ENCODE measurements at regions of chr1 and their contacts with region 1.

Region 1: DNA sequence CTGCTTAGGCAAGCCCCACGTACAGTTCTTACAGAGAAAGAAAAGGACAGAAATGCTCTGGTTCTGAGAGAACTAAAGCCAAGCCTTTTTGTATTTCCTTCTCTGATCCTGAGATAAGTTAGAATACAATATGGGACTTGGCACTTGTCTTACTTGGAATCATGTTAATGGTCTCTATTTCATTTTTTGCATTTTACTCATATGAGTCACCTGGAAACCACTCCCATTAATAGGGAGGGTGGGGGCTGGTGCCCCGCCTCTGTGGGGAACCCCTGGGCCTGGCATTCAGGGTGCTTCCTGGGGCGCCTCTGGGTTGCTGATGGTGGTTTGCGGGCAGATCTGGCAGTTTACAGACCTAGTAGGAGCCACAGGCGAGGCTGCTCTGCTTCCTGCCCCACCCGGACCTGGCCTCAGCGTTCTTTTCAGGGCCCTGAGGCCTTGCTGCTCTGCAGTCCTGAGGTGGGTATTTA is 26.7 kb downstream of the TSPAN2 start:
- DNase-seq: peak; percentile 70 to 97 (median 97)
- ATAC-seq: peak; percentile 97
- H3K4me3 ChIP-seq: peak overlapping the region; percentile 36
- H3K4me3 Mint-ChIP-seq: peak overlapping the region; percentile 60 to 87 (median 78)
- H3K27ac ChIP-seq: peak overlapping the region; percentile 84
- H3K27ac Mint-ChIP-seq: peak overlapping the region; percentile 89 to 100 (median 99)
- H3K4me1 ChIP-seq: peaks cover 32% of the 10 kb centered on the region in 2 donors
- H3K4me1 Mint-ChIP-seq: peaks cover 36 to 59% (median 46%) of the 10 kb centered on the region in 7 donors
- H3K27me3 ChIP-seq: no peaks in the 10 kb centered on the region
- H3K27me3 Mint-ChIP-seq: peaks cover 0 to 6% (median 0%) of the 10 kb centered on the region in 5 donors

Region 2: GRCh38 chr1:114581335-114582287 is 481.0 kb before region 1 on chr1 and contains the start of gene BCAS2:
- CTCF ChIA-PET with region 1: no interaction called
- POLR2A ChIA-PET with region 1: no interaction called
- intact Hi-C with region 1: loop called in 1 of 2 experiments (anchors 2 kb)
- DNase-seq: peak; percentile 71 to 98 (median 97)
- ATAC-seq: peak; percentile 97
- H3K4me3 ChIP-seq: peak within 1 kb of the TSS; percentile 76
- H3K4me3 Mint-ChIP-seq: peak within 1 kb of the TSS; percentile 92 to 99 (median 98)
- H3K27ac ChIP-seq: peak within 1 kb of the TSS; percentile 93
- H3K27ac Mint-ChIP-seq: peak within 1 kb of the TSS; percentile 95 to 99 (median 98)
- H3K4me1 ChIP-seq: peaks cover 21 to 23% of the 10 kb centered on the region in 2 donors
- H3K4me1 Mint-ChIP-seq: peaks cover 14 to 55% (median 41%) of the 10 kb centered on the region in 7 donors
- H3K27me3 ChIP-seq: peaks cover 0 to 3% of the 10 kb centered on the region in 2 donors
- H3K27me3 Mint-ChIP-seq: peaks cover 0 to 4% (median 4%) of the 10 kb centered on the region in 5 donors
- total RNA-seq, gene BCAS2: 32.3 to 87.1 (median 46.0) TPM

Region 3: DNA sequence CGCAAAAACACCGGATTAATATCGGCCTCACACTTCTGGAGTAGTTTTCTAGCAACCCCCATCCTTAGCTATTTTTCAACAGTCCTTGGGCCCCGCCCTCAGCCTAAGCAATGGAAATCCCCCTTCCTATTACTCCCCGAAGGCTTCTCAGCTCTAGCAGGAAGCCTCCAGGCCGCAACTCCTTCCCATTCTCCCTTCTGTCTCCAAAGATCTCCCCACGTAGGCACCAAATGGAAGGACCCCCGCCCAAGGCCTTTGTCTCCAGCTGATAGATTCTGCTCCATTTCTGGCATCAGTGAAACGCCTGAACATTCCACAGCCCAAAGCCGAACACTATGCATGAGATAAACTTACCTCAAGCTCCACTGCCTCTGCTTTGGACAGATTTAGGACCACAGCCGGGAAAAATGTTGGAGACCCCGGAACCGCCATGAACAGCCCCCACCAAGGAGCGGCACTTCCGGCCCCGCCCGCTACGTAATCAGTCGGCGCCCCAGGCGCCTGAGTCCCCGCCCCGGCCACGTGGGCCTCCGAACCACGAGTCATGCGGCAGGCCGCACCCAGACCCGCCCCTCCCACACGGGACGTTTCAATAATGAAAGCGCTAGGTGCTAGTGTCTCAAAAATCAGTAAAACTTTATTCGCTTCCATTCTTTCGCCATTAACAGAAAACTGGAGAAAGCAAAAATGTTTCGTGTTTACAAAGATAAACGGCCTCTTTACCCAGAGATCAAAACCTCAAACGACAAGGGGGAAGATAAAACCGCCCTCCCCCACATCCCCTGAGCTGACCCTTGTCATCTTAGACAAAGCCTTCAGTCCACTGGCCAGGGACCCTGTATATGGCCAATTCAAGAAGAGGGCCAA is 346.0 kb before region 1 on chr1 and contains the start of gene NRAS:
- CTCF ChIA-PET with region 1: no interaction called
- POLR2A ChIA-PET with region 1: no interaction called
- intact Hi-C with region 1: loop called in 1 of 2 experiments (anchors 2 kb)
- DNase-seq: peak; percentile 90 to 96 (median 94)
- ATAC-seq: peak; percentile 98
- H3K4me3 ChIP-seq: peak within 1 kb of the TSS; percentile 98
- H3K4me3 Mint-ChIP-seq: peak within 1 kb of the TSS; percentile 91 to 100 (median 96)
- H3K27ac ChIP-seq: peak within 1 kb of the TSS; percentile 98
- H3K27ac Mint-ChIP-seq: peak within 1 kb of the TSS; percentile 93 to 99 (median 97)
- H3K4me1 ChIP-seq: peaks cover 17 to 20% of the 10 kb centered on the region in 2 donors
- H3K4me1 Mint-ChIP-seq: peaks cover 10 to 34% (median 25%) of the 10 kb centered on the region in 7 donors
- H3K27me3 ChIP-seq: no peaks in the 10 kb centered on the region
- H3K27me3 Mint-ChIP-seq: no peaks in the 10 kb centered on the region
- total RNA-seq, gene NRAS: 22.3 to 56.0 (median 25.0) TPM

Region 4: DNA sequence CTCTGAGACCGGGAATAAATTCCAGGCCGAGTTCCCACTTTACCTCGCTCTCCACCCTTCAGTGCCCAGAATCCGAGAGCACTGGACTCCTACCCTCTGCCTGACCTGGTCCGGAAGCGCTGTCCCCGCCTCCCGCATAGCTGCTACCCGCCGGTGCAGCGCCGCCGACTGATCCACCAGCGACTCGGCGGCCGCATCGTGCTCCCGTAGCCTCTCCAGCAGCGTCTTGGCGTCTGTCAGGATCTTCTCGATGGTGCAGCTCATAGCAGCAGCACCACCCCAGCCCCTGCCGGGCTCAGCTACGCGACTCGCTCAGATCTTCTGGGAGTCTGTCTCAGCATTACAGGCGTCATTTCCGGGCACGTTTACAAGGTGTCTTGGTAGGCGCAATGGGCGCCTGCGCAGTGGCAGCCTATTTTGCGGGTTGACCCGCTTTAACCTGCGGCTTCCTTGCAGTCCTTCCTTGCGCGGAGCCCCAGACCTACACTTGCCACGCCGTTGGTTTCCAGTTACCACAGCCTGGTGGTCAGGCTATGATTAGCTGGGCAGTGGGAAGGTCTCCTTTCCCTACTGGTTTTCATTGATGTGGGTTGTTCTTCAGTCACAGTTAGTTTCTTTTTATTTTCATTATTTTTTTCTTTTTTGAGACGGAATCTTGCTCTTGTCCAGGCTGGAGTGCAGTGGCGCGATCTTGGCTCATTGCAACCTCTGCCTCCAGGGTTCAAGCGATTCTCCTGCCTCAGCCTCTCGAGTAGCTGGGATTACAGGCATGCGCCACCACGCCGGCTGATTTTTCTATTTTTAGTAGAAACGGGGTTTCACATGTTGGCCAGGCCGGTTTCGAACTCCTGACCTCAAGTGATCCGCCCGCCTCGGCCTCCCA is 282.0 kb before region 1 on chr1 and contains the start of gene SIKE1:
- CTCF ChIA-PET with region 1: no interaction called
- POLR2A ChIA-PET with region 1: no interaction called
- intact Hi-C with region 1: loop called in 1 of 2 experiments (anchors 2 kb)
- DNase-seq: peak; percentile 82 to 98 (median 95)
- ATAC-seq: peak; percentile 99
- H3K4me3 ChIP-seq: peak within 1 kb of the TSS; percentile 78
- H3K4me3 Mint-ChIP-seq: peak within 1 kb of the TSS; percentile 98 to 100 (median 100)
- H3K27ac ChIP-seq: peak within 1 kb of the TSS; percentile 87
- H3K27ac Mint-ChIP-seq: peak within 1 kb of the TSS; percentile 96 to 100 (median 99)
- H3K4me1 ChIP-seq: peaks cover 0 to 8% of the 10 kb centered on the region in 2 donors
- H3K4me1 Mint-ChIP-seq: peaks cover 19 to 40% (median 30%) of the 10 kb centered on the region in 7 donors
- H3K27me3 ChIP-seq: no peaks in the 10 kb centered on the region
- H3K27me3 Mint-ChIP-seq: peaks cover 0 to 17% (median 0%) of the 10 kb centered on the region in 5 donors
- total RNA-seq, gene SIKE1: 43.4 to 69.4 (median 61.2) TPM

Region 5: DNA sequence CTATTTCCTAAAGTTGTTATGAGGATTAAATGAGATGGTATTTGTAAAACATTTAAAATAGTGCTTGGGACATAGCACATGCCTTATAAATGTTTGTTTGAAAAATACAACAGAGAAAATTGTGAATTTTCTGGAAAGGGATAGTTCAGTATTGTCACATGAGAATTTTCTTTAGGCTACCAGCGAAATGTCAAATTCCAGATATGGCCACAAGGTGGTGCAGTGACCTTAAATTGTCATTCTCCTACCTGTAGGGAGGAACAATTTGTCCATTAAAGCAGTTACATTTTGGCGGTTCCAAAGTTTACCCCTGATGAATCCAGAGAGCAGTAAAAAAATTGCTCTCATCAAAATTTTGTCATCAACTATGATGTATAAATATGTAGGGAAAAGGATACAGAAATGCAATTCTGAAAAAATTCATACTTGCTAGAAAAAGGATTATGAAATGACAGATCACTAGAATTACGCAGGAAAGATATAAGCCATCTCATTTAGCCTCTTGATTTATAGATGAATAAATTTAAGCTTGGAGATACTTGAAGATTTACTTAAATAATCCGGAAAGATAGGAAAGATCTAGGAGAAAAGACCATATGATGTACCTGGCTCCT is 83.2 kb before region 1 on chr1:
- CTCF ChIA-PET with region 1: interaction called, 3 read pairs
- POLR2A ChIA-PET with region 1: no interaction called
- intact Hi-C with region 1: loop called in 1 of 2 experiments (anchors 1 kb)
- DNase-seq: peak; percentile 32 to 69 (median 56)
- ATAC-seq: peak; percentile 76
- H3K4me3 ChIP-seq: no peak overlapping the region
- H3K4me3 Mint-ChIP-seq: no peak overlapping the region
- H3K27ac ChIP-seq: no peak overlapping the region
- H3K27ac Mint-ChIP-seq: no peak overlapping the region
- H3K4me1 ChIP-seq: no peaks in the 10 kb centered on the region
- H3K4me1 Mint-ChIP-seq: no peaks in the 10 kb centered on the region
- H3K27me3 ChIP-seq: no peaks in the 10 kb centered on the region
- H3K27me3 Mint-ChIP-seq: peaks cover 5 to 23% (median 14%) of the 10 kb centered on the region in 5 donors

Region 6: DNA sequence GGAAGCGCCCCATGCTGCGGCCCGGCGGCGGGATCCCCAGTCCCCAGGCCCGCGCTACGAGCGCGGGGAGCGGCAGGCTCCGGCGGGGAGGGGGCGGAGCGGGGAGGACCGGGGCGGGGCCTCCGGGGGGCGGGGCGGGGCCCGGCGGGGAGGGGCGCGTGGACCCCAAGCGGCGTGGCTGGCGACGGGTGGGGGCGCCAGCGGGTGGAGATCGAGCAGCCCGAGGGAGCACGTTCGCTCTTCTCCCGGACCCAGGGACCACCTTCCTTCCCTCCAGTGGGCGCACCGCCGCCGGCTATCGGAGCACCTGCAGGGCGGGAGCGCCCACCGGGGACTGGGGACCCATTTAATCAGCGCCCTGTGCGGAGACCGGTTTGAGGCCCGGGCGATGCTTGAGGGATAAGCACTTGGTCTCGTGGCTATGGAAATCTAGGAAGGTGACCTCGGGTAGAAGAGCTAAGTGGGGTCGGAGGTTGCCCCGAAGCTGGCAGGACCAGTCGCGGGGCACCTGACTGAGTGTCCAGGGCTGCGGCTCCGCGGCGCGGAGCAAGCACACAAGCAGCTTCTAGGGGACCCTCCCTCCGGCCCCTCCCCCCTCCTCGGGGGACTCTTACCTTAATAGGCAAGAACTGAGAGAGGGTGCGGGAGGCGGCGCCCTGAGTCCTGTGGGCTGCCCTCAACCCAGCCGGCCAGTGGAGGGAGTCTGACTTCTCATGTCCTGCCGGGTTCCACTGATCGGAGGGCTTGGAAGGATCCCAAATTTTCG is 27.0 kb after region 1 on chr1 and contains the start of gene TSPAN2:
- CTCF ChIA-PET with region 1: no interaction called
- POLR2A ChIA-PET with region 1: interaction called, 4 read pairs
- intact Hi-C with region 1: loop called in 1 of 2 experiments (anchors 1 kb)
- DNase-seq: peak; percentile 43 to 63 (median 57)
- ATAC-seq: peak; percentile 90
- H3K4me3 ChIP-seq: peak within 1 kb of the TSS; percentile 76
- H3K4me3 Mint-ChIP-seq: peak within 1 kb of the TSS; percentile 74 to 88 (median 84)
- H3K27ac ChIP-seq: peak within 1 kb of the TSS; percentile 69
- H3K27ac Mint-ChIP-seq: peak within 1 kb of the TSS; percentile 7 to 93 (median 71)
- H3K4me1 ChIP-seq: peaks cover 6 to 9% of the 10 kb centered on the region in 2 donors
- H3K4me1 Mint-ChIP-seq: peaks cover 10 to 54% (median 29%) of the 10 kb centered on the region in 7 donors
- H3K27me3 ChIP-seq: no peaks in the 10 kb centered on the region
- H3K27me3 Mint-ChIP-seq: peaks cover 0 to 29% (median 0%) of the 10 kb centered on the region in 5 donors
- total RNA-seq, gene TSPAN2: 0.30 to 12.0 (median 2.9) TPM in 4 of 5 experiments, not detected in the other

Region 7: DNA sequence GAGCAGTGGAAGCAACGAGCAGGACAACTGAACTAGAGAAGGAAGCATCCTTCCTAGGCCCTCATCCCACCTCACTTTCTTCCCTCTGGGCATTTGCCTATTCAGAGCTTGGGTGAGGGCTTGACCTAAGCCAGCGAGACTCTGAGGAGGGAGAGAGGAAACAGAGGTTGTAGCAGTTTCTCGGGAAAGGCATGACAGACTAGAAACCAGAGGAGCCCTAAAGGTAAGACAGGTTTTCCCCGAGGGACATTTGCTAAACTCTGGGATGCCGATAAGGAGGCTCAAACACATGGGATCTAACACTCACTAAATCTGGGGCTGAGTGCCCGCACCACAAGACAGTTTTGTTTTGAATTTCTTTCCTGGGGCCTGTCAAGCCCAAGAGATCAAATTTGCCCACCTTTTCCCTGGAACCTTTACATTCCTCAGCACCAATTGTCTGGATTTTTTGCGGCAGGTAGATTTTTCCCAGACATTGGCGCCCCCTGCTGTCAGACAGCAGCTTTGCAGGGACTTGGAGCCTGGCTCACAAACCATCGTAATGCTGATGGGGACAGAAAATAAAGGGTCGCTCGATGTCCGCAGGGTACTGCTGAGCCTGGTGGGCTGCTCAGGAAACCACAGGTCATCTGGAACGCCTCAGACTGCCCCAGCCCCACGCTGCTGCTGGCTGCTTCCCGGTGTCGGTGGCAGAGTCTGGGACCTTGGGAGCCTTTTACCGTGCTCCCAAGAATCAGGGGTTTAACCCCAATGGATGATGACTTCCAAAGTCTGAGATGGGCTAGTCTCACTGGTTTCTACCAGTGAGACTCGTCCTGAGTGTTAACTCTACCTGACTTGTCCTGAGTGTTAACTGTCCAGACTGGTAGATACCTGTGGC is 50.2 kb after region 1 on chr1:
- CTCF ChIA-PET with region 1: interaction called, 3 read pairs
- POLR2A ChIA-PET with region 1: no interaction called
- intact Hi-C with region 1: loop called in 1 of 2 experiments (anchors 1 kb)
- DNase-seq: peak; percentile 18 to 62 (median 40)
- ATAC-seq: peak; percentile 61
- H3K4me3 ChIP-seq: no peak overlapping the region
- H3K4me3 Mint-ChIP-seq: no peak overlapping the region
- H3K27ac ChIP-seq: no peak overlapping the region
- H3K27ac Mint-ChIP-seq: peak overlapping the region in 5 of 9 donors; percentile 23 to 63 (median 39)
- H3K4me1 ChIP-seq: no peaks in the 10 kb centered on the region
- H3K4me1 Mint-ChIP-seq: peaks cover 0 to 18% (median 8%) of the 10 kb centered on the region in 7 donors
- H3K27me3 ChIP-seq: no peaks in the 10 kb centered on the region
- H3K27me3 Mint-ChIP-seq: peaks cover 0 to 3% (median 0%) of the 10 kb centered on the region in 5 donors

Region 8: DNA sequence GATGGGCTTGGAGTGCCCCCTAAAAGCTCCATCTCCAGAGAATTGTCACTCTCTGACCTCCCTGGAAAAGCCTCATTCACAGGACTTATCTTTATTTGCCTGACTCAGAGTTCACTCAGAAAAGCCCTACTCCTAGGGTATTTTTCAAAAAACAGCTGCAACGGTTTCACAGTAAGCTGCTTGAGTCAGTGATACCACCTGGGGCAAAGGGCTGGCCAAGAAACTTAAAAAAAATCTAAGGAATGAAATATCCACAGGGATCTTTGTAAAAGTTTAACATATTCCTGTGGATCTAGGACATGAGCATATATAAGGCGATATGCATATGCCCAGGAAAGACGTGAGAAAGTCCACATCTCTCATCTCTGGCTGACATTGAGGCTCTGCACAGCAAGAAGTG is 60.5 kb after region 1 on chr1:
- CTCF ChIA-PET with region 1: no interaction called
- POLR2A ChIA-PET with region 1: no interaction called
- intact Hi-C with region 1: no loop called
- DNase-seq: no peak
- ATAC-seq: no peak
- H3K4me3 ChIP-seq: no peak overlapping the region
- H3K4me3 Mint-ChIP-seq: no peak overlapping the region
- H3K27ac ChIP-seq: no peak overlapping the region
- H3K27ac Mint-ChIP-seq: no peak overlapping the region
- H3K4me1 ChIP-seq: no peaks in the 10 kb centered on the region
- H3K4me1 Mint-ChIP-seq: no peaks in the 10 kb centered on the region
- H3K27me3 ChIP-seq: no peaks in the 10 kb centered on the region
- H3K27me3 Mint-ChIP-seq: peaks cover 5 to 70% (median 36%) of the 10 kb centered on the region in 5 donors

Measured in naive thymus-derived CD4-positive, alpha-beta T cell (primary cell).